SK-N-SH (cell line): ENCODE measurements at regions of chr14 and their contacts with region 1.

Region 1: GRCh38 chr14:52299692-52300278 is 14.3 kb upstream of the PTGER2 start:
- DNase-seq: peak; percentile 59
- H3K4me3 ChIP-seq: no peak overlapping the region; a peak in 1 of 4 replicates
- H3K27ac ChIP-seq: no peak overlapping the region
- H3K4me1 ChIP-seq: no peaks in the 10 kb centered on the region
- H3K27me3 ChIP-seq: peaks cover 7% of the 10 kb centered on the region; the same call in 1 of the 2 replicates
- CTCF ChIP-seq: peak; percentile 81
- EP300 ChIP-seq: no peak
- RAD21 ChIP-seq: peak; percentile 90

Region 2: DNA sequence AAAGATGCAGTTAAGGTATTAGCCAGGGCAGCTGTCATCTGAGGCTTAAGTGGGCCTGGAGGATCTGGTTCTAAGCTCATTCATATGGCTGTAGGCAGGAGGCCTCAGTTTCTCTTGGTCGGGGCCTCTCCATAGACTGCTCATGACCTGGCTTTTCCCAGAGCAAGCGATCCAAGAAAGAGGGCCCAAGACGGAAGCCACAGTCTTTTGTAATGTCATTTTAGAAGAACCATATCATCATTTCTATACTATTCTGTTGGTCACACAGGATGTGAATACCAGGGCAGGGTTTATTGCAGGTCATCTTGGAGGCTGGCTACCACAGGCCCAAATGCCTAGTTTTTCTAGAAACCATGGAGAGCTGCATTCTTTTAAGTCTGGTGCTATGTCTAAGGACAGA is 391.7 kb before region 1 on chr14:
- CTCF ChIA-PET with region 1: no interaction called
- POLR2A ChIA-PET with region 1: no interaction called
- DNase-seq: no peak
- H3K4me3 ChIP-seq: no peak overlapping the region
- H3K27ac ChIP-seq: no peak overlapping the region
- H3K4me1 ChIP-seq: peaks cover 8 to 12% of the 10 kb centered on the region in 2 experiments; a peak in 3 of 4 replicates
- H3K27me3 ChIP-seq: no peaks in the 10 kb centered on the region
- CTCF ChIP-seq: no peak
- EP300 ChIP-seq: no peak
- RAD21 ChIP-seq: no peak

Region 3: GRCh38 chr14:52286661-52287649 is 12.8 kb before region 1 on chr14:
- CTCF ChIA-PET with region 1: interaction called, 11 read pairs
- POLR2A ChIA-PET with region 1: no interaction called
- DNase-seq: no peak
- H3K4me3 ChIP-seq: no peak overlapping the region
- H3K27ac ChIP-seq: no peak overlapping the region
- H3K4me1 ChIP-seq: no peaks in the 10 kb centered on the region
- H3K27me3 ChIP-seq: peaks cover 6% of the 10 kb centered on the region; the same call in 1 of the 2 replicates
- CTCF ChIP-seq: no peak
- EP300 ChIP-seq: no peak
- RAD21 ChIP-seq: no peak

Region 4: DNA sequence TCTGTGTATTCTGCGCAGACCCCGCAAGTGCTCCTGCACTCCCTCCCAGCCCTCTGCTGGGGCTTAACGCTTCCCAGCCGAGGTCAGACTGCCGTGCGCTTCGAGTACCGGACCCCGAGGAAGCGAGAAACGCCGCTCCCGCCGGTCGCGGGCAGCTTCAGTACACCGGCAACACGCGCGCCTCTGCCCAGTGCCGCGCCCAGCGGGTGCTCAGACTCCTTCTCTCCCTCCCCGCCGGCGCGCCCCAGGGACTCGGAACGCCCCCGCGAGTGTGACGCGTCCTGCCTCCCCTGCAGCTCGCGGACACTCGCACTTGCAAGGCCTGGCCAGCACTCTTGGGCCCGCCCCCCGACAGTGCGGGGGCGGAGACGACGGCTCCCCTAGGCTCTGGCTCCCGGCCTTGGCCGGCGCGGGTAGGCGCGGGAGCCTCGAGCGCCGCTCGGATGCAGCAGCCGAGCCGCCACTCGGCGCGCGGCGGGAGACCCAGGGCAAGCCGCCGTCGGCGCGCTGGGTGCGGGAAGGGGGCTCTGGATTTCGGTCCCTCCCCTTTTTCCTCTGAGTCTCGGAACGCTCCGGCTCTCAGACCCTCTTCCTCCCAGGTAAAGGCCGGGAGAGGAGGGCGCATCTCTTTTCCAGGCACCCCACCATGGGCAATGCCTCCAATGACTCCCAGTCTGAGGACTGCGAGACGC is 14.3 kb after region 1 on chr14 and contains the start of gene PTGER2:
- CTCF ChIA-PET with region 1: interaction called, 43 read pairs
- POLR2A ChIA-PET with region 1: no interaction called
- DNase-seq: peak; percentile 85
- H3K4me3 ChIP-seq: peak within 1 kb of the TSS; percentile 63 to 66
- H3K27ac ChIP-seq: peak within 1 kb of the TSS in 1 of 2 experiments; percentile 75; a peak in 1 of 4 replicates
- H3K4me1 ChIP-seq: peaks cover 0 to 21% of the 10 kb centered on the region in 2 experiments; a peak in 2 of 4 replicates
- H3K27me3 ChIP-seq: peaks cover 22% of the 10 kb centered on the region; the same call in 1 of the 2 replicates
- CTCF ChIP-seq: no peak
- EP300 ChIP-seq: no peak
- RAD21 ChIP-seq: no peak
- polyA plus RNA-seq, gene PTGER2: 0.67 and 1.0 TPM in 2 replicates

Region 5: GRCh38 chr14:52467515-52468266 is 167.9 kb after region 1 on chr14:
- CTCF ChIA-PET with region 1: interaction called, 18 read pairs
- POLR2A ChIA-PET with region 1: no interaction called
- DNase-seq: no peak
- H3K4me3 ChIP-seq: no peak overlapping the region
- H3K27ac ChIP-seq: no peak overlapping the region
- H3K4me1 ChIP-seq: no peaks in the 10 kb centered on the region
- H3K27me3 ChIP-seq: no peaks in the 10 kb centered on the region
- CTCF ChIP-seq: no peak
- EP300 ChIP-seq: no peak
- RAD21 ChIP-seq: no peak

Region 6: GRCh38 chr14:52473557-52473956 is 173.8 kb after region 1 on chr14:
- CTCF ChIA-PET with region 1: interaction called, 18 read pairs
- POLR2A ChIA-PET with region 1: no interaction called
- DNase-seq: peak; percentile 16
- H3K4me3 ChIP-seq: no peak overlapping the region
- H3K27ac ChIP-seq: no peak overlapping the region
- H3K4me1 ChIP-seq: no peaks in the 10 kb centered on the region
- H3K27me3 ChIP-seq: no peaks in the 10 kb centered on the region
- CTCF ChIP-seq: peak; percentile 64
- EP300 ChIP-seq: no peak
- RAD21 ChIP-seq: peak; percentile 76